K562 (cell line): ENCODE measurements at regions of chr14 and their contacts with region 1.

Region 1: GRCh38 chr14:56992332-56992820 is 182.1 kb upstream of the OTX2 start:
- DNase-seq: peak; percentile 53 to 91 (median 62)
- ATAC-seq: peak; percentile 100
- H3K4me3 ChIP-seq: peak overlapping the region; percentile 50
- H3K27ac ChIP-seq: peak overlapping the region; percentile 83
- H3K4me1 ChIP-seq: peaks cover 0 to 5% of the 10 kb centered on the region in 2 experiments; a peak in 2 of 5 replicates
- H3K27me3 ChIP-seq: no peaks in the 10 kb centered on the region
- CTCF ChIP-seq: no peak
- EP300 ChIP-seq: no peak; the same call in 1 of the 2 replicates
- POLR2A ChIP-seq: peak; percentile 74
- RAD21 ChIP-seq: no peak

Region 2: GRCh38 chr14:56846970-56847922 is 145.1 kb before region 1 on chr14:
- CTCF ChIA-PET with region 1: no interaction called
- POLR2A ChIA-PET with region 1: no interaction called
- in situ Hi-C with region 1: no loop called
- intact Hi-C with region 1: no loop called
- DNase-seq: no peak
- ATAC-seq: no peak
- H3K4me3 ChIP-seq: no peak overlapping the region
- H3K27ac ChIP-seq: no peak overlapping the region
- H3K4me1 ChIP-seq: no peaks in the 10 kb centered on the region
- H3K27me3 ChIP-seq: peaks cover 3 to 9% of the 10 kb centered on the region in 2 experiments; a peak in 3 of 5 replicates
- CTCF ChIP-seq: no peak
- EP300 ChIP-seq: no peak
- POLR2A ChIP-seq: no peak
- RAD21 ChIP-seq: no peak

Region 3: DNA sequence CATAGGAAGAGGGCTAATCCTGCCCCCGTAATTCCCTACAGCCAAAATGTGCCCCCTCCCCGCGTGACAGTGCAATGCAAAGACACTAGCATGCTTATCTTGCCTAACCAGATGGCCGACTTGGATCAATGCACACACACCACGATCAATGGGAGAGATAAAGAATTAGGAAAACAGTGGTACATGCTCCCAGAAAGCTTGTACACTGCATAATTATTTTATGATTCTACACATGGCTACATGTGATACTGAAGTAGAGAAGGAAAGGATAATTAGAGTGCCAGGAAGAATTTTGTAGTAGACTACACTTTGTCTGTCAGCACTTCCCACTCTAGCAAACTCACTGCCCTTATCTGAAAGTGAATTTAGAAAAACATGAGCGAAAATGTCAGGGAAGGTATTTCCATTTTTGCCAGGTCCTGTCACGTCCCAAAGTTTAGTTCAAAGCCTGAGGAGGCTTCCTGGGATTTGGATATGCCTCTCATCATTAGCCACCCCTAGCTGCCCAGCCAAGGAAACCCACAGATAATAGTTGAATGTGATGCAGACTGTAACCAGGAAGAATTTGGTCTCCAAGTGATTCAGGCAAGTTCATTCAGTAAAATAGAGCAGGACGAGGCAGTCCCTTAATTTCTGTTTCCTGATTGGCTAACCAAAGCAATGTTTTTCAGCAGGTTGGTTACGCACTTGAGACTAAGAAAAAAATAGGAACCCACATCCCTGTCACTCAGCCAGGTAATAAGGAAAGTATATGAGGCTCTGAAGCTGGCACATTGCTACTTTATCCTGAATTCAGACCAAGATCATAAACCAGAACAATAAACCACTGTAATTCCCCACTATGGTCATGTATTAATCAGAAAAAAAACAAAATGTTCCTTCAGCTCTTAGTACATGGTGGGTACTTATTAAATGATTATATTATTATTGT is 17.5 kb after region 1 on chr14:
- CTCF ChIA-PET with region 1: no interaction called
- POLR2A ChIA-PET with region 1: interaction called, 29 read pairs
- in situ Hi-C with region 1: no loop called
- intact Hi-C with region 1: loop called (anchors 1 kb)
- DNase-seq: peak; percentile 75 to 92 (median 81)
- ATAC-seq: peak; percentile 89
- H3K4me3 ChIP-seq: peak overlapping the region; percentile 9; the same call in 1 of the 2 replicates
- H3K27ac ChIP-seq: peak overlapping the region; percentile 85
- H3K4me1 ChIP-seq: peaks cover 0 to 9% of the 10 kb centered on the region in 2 experiments; a peak in 1 of 5 replicates
- H3K27me3 ChIP-seq: no peaks in the 10 kb centered on the region
- CTCF ChIP-seq: peak in 1 of 3 experiments; percentile 6; a peak in 1 of 6 replicates
- EP300 ChIP-seq: peak; percentile 93
- POLR2A ChIP-seq: peak; percentile 80
- RAD21 ChIP-seq: no peak

Region 4: DNA sequence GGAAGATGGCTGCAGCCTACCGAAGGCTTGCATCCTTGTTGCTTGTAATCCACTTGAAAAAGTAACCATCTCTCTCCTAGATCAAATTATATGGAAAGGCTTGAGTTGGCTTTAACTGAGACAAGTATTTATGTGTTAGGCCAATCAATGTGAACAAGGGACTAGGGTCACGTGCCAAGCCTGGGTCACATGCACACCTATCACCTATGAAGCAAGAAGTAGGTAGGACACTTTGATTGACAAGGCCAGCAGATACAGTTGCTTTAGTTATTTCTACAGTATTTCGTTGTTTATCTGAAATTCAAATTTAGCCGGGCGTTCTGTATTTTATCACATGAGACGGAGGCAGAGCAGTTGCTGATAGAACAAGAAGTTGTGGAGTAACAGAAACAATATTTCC is 30.2 kb after region 1 on chr14:
- CTCF ChIA-PET with region 1: no interaction called
- POLR2A ChIA-PET with region 1: no interaction called
- in situ Hi-C with region 1: no loop called
- intact Hi-C with region 1: no loop called
- DNase-seq: no peak
- ATAC-seq: no peak
- H3K4me3 ChIP-seq: no peak overlapping the region
- H3K27ac ChIP-seq: no peak overlapping the region
- H3K4me1 ChIP-seq: no peaks in the 10 kb centered on the region
- H3K27me3 ChIP-seq: no peaks in the 10 kb centered on the region
- CTCF ChIP-seq: no peak
- EP300 ChIP-seq: no peak
- POLR2A ChIP-seq: no peak
- RAD21 ChIP-seq: no peak

Region 5: DNA sequence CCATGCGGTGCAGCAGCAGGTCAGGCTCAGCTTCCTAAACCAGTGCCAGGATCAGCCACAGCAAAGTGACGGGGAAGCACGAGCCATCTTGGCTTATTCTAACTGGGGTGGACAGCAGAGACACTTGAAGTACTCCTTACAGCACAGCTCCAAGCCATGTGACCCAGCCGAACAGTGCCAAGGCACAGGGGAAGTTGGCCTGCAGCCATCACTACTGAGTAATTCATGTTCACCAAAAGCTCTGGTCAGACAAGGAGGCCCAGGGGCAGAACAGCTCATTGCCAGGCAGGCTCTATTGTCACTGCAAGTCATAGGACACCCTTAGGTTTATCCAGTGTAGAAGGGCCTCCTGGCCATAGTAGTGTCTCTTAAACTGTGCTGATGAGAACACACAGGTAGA is 896.9 kb after region 1 on chr14:
- CTCF ChIA-PET with region 1: no interaction called
- POLR2A ChIA-PET with region 1: no interaction called
- in situ Hi-C with region 1: no loop called
- intact Hi-C with region 1: no loop called
- DNase-seq: no peak
- ATAC-seq: no peak
- H3K4me3 ChIP-seq: no peak overlapping the region
- H3K27ac ChIP-seq: no peak overlapping the region
- H3K4me1 ChIP-seq: no peaks in the 10 kb centered on the region
- H3K27me3 ChIP-seq: no peaks in the 10 kb centered on the region
- CTCF ChIP-seq: no peak
- EP300 ChIP-seq: no peak
- POLR2A ChIP-seq: no peak
- RAD21 ChIP-seq: no peak